Gastrocnemius medialis (tissue), 4 donors: ENCODE measurements at regions of chr2 and their contacts with region 1.

Region 1: DNA sequence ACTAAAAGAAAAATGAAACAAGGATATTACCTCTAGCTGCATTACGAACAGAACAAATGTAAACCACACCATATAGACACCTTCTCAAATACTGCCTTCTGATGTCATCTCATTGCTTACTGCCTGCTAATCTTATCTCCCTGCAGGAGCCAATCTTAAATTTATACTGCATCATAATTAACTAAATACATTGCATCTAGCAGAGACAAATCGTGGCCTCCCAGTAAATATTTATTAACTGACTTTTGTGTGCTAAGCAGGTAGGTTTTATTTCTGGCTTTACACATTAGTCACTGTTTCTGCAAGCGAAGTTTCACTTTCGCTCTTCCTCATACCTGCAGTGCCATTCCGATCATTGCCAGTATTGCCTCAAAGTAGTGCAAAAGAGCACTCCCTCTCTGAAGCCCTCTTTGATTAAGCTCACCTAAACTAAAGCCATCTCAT is 67.5 kb downstream of the SPATS2L start:
- DNase-seq: no peak
- ATAC-seq: no peak
- H3K4me3 ChIP-seq: peak overlapping the region in 1 of 4 donors; percentile 28
- H3K27ac ChIP-seq: peak overlapping the region; percentile 20 to 88 (median 86)
- H3K4me1 ChIP-seq: peaks cover 53 to 70% of the 10 kb centered on the region in 2 donors
- H3K27me3 ChIP-seq: no peaks in the 10 kb centered on the region
- CTCF ChIP-seq: no peak
- POLR2A ChIP-seq: no peak

Region 2: DNA sequence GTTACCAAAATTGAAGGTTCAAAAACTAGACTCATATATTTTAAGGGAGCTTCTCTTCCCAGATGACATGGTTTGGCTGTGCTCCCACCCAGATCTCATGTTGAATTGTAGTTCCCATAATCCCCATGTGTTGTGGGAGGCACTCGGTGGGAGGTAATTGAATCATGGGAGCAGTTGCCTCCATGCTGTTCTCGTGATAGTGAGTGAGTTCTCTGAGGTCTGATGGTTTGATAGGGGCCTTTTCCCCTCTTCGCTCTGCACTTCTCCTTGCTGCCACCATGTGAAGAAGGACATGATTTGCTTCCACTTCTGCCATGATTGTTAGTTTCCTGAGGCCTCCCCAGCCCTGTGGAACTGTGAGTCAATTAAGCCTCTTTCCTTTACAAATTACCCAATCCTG is 278.6 kb before region 1 on chr2:
- in situ Hi-C with region 1: no loop called
- intact Hi-C with region 1: no loop called
- DNase-seq: no peak
- ATAC-seq: no peak
- H3K4me3 ChIP-seq: no peak overlapping the region
- H3K27ac ChIP-seq: no peak overlapping the region
- H3K4me1 ChIP-seq: no peaks in the 10 kb centered on the region
- H3K27me3 ChIP-seq: no peaks in the 10 kb centered on the region
- CTCF ChIP-seq: no peak
- POLR2A ChIP-seq: no peak

Region 3: GRCh38 chr2:200212862-200213425 is 161.1 kb before region 1 on chr2:
- in situ Hi-C with region 1: no loop called
- intact Hi-C with region 1: no loop called
- DNase-seq: no peak
- ATAC-seq: no peak
- H3K4me3 ChIP-seq: no peak overlapping the region
- H3K27ac ChIP-seq: no peak overlapping the region
- H3K4me1 ChIP-seq: no peaks in the 10 kb centered on the region
- H3K27me3 ChIP-seq: no peaks in the 10 kb centered on the region
- CTCF ChIP-seq: no peak
- POLR2A ChIP-seq: no peak

Region 4: DNA sequence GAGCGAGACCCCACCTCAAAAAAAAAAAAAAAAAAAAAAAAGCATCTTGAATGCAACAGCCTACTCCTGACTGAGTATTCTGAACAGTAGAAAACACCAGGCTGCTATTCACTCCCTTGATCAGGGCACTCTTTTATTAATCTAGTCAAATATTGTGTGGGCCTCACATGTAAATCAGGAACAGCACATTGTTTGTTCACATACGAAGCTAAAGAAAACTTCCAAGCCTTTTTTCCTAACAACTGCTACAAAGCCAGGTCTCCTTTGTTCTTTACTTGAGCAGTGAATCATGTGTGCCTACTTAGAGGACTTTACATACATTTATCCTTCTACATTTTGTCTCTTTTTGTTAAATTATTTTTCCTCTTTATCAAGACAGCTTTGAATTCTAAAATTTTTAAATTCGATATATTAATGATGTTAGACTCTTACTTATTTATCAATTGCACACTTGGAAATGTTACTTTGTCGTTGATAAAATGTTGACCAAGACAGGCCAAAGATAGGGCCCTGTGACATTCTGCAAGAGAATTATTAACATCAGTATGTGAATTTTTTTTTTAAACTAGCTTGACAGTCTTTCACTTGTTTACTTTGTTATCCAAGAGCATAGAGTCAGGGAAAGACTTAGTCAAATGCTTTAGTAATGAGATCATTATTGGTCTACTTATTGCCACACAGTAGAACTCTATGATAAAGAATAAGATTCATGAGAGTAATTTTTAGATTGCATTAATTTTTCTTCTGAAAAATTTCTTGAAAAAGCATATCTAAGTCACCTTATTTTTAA is 54.3 kb before region 1 on chr2:
- in situ Hi-C with region 1: loop called in 1 of 4 experiments (anchors 10 kb)
- intact Hi-C with region 1: loop called (anchors 2 kb)
- DNase-seq: no peak
- ATAC-seq: peak; percentile 37 to 46
- H3K4me3 ChIP-seq: no peak overlapping the region
- H3K27ac ChIP-seq: peak overlapping the region; percentile 9 to 57 (median 40)
- H3K4me1 ChIP-seq: peaks cover 59 to 61% of the 10 kb centered on the region in 2 donors
- H3K27me3 ChIP-seq: no peaks in the 10 kb centered on the region
- CTCF ChIP-seq: no peak
- POLR2A ChIP-seq: no peak

Region 5: GRCh38 chr2:200454927-200455801 is 81.2 kb after region 1 on chr2:
- in situ Hi-C with region 1: no loop called
- intact Hi-C with region 1: no loop called
- DNase-seq: no peak
- ATAC-seq: peak; percentile 82 to 86
- H3K4me3 ChIP-seq: no peak overlapping the region
- H3K27ac ChIP-seq: no peak overlapping the region
- H3K4me1 ChIP-seq: peaks cover 12 to 16% of the 10 kb centered on the region in 2 donors
- H3K27me3 ChIP-seq: no peaks in the 10 kb centered on the region
- CTCF ChIP-seq: no peak
- POLR2A ChIP-seq: no peak

Region 6: GRCh38 chr2:200713003-200713703 is 339.2 kb after region 1 on chr2:
- in situ Hi-C with region 1: no loop called
- intact Hi-C with region 1: no loop called
- DNase-seq: peak; percentile 83 to 89
- ATAC-seq: peak; percentile 99 to 100
- H3K4me3 ChIP-seq: peak overlapping the region; percentile 33 to 51 (median 42)
- H3K27ac ChIP-seq: peak overlapping the region; percentile 70 to 82 (median 74)
- H3K4me1 ChIP-seq: peaks cover 0 to 3% of the 10 kb centered on the region in 2 donors
- H3K27me3 ChIP-seq: no peaks in the 10 kb centered on the region
- CTCF ChIP-seq: peak; percentile 73 to 89 (median 86)
- POLR2A ChIP-seq: peak; percentile 66 to 80